CD4-positive, alpha-beta memory T cell (primary cell): ENCODE measurements at regions of chr19 and their contacts with region 1.

Region 1: GRCh38 chr19:6891761-6892385 is 4.5 kb downstream of the ADGRE1 start:
- DNase-seq: peak in 4 of 5 donors; percentile 26 to 48 (median 29)
- H3K4me3 ChIP-seq: no peak overlapping the region
- H3K4me3 Mint-ChIP-seq: peak overlapping the region; percentile 67 to 80 (median 74)
- H3K27ac ChIP-seq: peak overlapping the region; percentile 3
- H3K27ac Mint-ChIP-seq: peak overlapping the region; percentile 78 to 95 (median 90)
- H3K4me1 ChIP-seq: peaks cover 68% of the 10 kb centered on the region
- H3K4me1 Mint-ChIP-seq: peaks cover 64 to 95% (median 75%) of the 10 kb centered on the region in 4 donors
- H3K27me3 ChIP-seq: no peaks in the 10 kb centered on the region
- H3K27me3 Mint-ChIP-seq: no peaks in the 10 kb centered on the region

Region 2: GRCh38 chr19:6868351-6868750 is 23.5 kb before region 1 on chr19:
- CTCF ChIA-PET with region 1: interaction called, 51 read pairs
- POLR2A ChIA-PET with region 1: interaction called, 43 read pairs
- intact Hi-C with region 1: loop called (anchors 1 kb)
- DNase-seq: no peak
- H3K4me3 ChIP-seq: no peak overlapping the region
- H3K4me3 Mint-ChIP-seq: no peak overlapping the region
- H3K27ac ChIP-seq: no peak overlapping the region
- H3K27ac Mint-ChIP-seq: peak overlapping the region in 1 of 7 donors; percentile 9
- H3K4me1 ChIP-seq: peaks cover 8% of the 10 kb centered on the region
- H3K4me1 Mint-ChIP-seq: peaks cover 8 to 20% (median 10%) of the 10 kb centered on the region in 4 donors
- H3K27me3 ChIP-seq: no peaks in the 10 kb centered on the region
- H3K27me3 Mint-ChIP-seq: no peaks in the 10 kb centered on the region

Region 3: DNA sequence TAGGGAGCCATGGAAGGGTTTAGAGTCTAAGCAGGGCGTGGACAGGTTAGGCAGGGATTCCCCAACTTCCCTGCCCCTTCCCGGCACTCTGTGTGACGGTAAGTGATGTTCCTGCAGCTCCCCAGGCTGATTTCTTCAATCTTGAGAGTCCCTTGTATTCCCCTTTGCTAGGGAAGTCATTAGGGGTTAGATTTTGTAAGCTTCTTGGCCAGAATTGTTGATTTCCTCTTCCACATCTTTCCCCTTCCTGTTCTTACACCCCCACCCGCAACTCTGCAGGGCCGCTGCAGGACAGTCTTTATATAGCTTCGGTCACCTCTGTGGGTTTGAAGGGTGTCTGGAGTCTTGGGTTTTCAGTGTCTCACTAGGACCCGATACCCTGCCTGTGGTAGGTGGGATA is 15.1 kb before region 1 on chr19:
- CTCF ChIA-PET with region 1: interaction called, 7 read pairs
- POLR2A ChIA-PET with region 1: interaction called, 24 read pairs
- intact Hi-C with region 1: no loop called
- DNase-seq: no peak
- H3K4me3 ChIP-seq: no peak overlapping the region
- H3K4me3 Mint-ChIP-seq: no peak overlapping the region
- H3K27ac ChIP-seq: no peak overlapping the region
- H3K27ac Mint-ChIP-seq: no peak overlapping the region
- H3K4me1 ChIP-seq: no peaks in the 10 kb centered on the region
- H3K4me1 Mint-ChIP-seq: peaks cover 0 to 11% (median 6%) of the 10 kb centered on the region in 4 donors
- H3K27me3 ChIP-seq: no peaks in the 10 kb centered on the region
- H3K27me3 Mint-ChIP-seq: no peaks in the 10 kb centered on the region

Region 4: DNA sequence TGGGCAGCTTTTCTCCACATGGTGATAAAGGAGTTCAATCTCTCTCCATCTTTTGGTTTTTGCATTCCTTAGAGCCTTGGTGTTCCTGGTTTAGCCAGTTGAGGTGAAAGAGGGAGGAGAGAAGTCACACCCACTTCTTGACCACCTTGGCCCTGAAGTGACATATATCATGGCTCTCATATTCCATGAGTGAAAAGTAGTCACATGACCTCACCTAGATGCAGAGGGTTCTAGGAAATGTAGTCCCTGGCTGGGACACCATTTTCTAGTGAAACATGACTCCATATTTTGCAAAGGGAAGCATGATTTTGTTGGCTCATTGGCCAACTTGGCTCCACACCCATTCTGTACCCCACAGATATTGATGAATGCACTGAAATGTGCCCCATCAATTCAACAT is 11.6 kb after region 1 on chr19:
- CTCF ChIA-PET with region 1: interaction called, 4 read pairs
- POLR2A ChIA-PET with region 1: interaction called, 12 read pairs
- intact Hi-C with region 1: no loop called
- DNase-seq: no peak
- H3K4me3 ChIP-seq: no peak overlapping the region
- H3K4me3 Mint-ChIP-seq: no peak overlapping the region
- H3K27ac ChIP-seq: no peak overlapping the region
- H3K27ac Mint-ChIP-seq: no peak overlapping the region
- H3K4me1 ChIP-seq: no peaks in the 10 kb centered on the region
- H3K4me1 Mint-ChIP-seq: peaks cover 0 to 2% (median 0%) of the 10 kb centered on the region in 4 donors
- H3K27me3 ChIP-seq: no peaks in the 10 kb centered on the region
- H3K27me3 Mint-ChIP-seq: peaks cover 1 to 2% of the 10 kb centered on the region in 2 donors

Region 5: DNA sequence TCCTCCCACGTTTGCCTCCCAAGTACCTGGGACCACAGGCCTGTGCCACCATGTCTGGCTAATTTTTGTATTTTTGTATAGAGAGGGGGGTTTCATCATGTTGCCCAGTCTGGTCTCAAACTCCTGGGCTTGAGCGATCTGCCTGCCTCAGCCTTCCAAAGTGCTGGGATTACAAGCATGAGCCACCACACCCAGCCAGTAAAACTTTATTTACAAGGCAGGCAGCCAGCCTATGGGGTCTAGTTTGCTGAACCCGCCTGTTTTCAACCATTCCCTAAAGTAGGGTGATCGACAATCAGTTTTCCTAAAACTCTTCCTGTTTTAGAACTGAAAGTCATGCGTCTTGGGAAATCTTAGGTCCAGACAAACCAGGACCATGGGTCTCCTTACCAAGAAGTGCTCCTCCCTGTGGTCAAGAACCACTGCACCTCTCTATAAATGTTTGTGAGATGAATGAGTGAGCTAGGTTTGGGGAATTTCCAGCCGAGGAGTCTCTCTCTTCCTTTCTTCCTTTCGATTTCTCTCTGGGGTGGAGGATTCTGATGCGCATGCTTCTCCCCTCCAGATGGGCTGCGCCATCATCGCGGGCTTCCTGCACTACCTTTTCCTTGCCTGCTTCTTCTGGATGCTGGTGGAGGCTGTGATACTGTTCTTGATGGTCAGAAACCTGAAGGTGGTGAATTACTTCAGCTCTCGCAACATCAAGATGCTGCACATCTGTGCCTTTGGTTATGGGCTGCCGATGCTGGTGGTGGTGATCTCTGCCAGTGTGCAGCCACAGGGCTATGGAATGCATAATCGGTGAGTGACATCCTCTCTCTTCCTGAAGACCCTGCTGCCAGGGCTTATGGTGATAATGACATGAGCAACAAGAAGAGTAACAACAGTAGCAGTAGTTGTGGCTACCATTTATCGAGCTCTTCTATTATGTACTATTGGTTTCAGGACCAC is 34.2 kb after region 1 on chr19:
- CTCF ChIA-PET with region 1: interaction called, 16 read pairs
- POLR2A ChIA-PET with region 1: interaction called, 4 read pairs
- intact Hi-C with region 1: no loop called
- DNase-seq: peak; percentile 8 to 63 (median 22)
- H3K4me3 ChIP-seq: peak overlapping the region; percentile 24 to 60
- H3K4me3 Mint-ChIP-seq: peak overlapping the region; percentile 48 to 92 (median 80)
- H3K27ac ChIP-seq: peak overlapping the region; percentile 13
- H3K27ac Mint-ChIP-seq: peak overlapping the region; percentile 24 to 90 (median 86)
- H3K4me1 ChIP-seq: peaks cover 14% of the 10 kb centered on the region
- H3K4me1 Mint-ChIP-seq: peaks cover 7 to 16% (median 13%) of the 10 kb centered on the region in 4 donors
- H3K27me3 ChIP-seq: no peaks in the 10 kb centered on the region
- H3K27me3 Mint-ChIP-seq: no peaks in the 10 kb centered on the region

Region 6: GRCh38 chr19:6970443-6970842 is 78.6 kb after region 1 on chr19:
- CTCF ChIA-PET with region 1: no interaction called
- POLR2A ChIA-PET with region 1: no interaction called
- intact Hi-C with region 1: no loop called
- DNase-seq: no peak
- H3K4me3 ChIP-seq: peak overlapping the region in 1 of 2 donors; percentile 11
- H3K4me3 Mint-ChIP-seq: no peak overlapping the region
- H3K27ac ChIP-seq: no peak overlapping the region
- H3K27ac Mint-ChIP-seq: peak overlapping the region in 1 of 7 donors; percentile 10
- H3K4me1 ChIP-seq: no peaks in the 10 kb centered on the region
- H3K4me1 Mint-ChIP-seq: no peaks in the 10 kb centered on the region
- H3K27me3 ChIP-seq: no peaks in the 10 kb centered on the region
- H3K27me3 Mint-ChIP-seq: peaks cover 0 to 2% of the 10 kb centered on the region in 2 donors